Heart left ventricle (tissue), 16 donors: ENCODE measurements at regions of chr15 and their contacts with region 1.

Region 1: GRCh38 chr15:67101911-67102598 is 36.7 kb downstream of the SMAD3 start:
- DNase-seq: no peak
- ATAC-seq: no peak
- H3K4me3 ChIP-seq: no peak overlapping the region
- H3K27ac ChIP-seq: peak overlapping the region in 1 of 12 donors; percentile 73
- H3K4me1 ChIP-seq: peaks cover 12 to 98% (median 73%) of the 10 kb centered on the region in 12 donors
- H3K27me3 ChIP-seq: no peaks in the 10 kb centered on the region
- CTCF ChIP-seq: no peak
- POLR2A ChIP-seq: no peak

Region 2: GRCh38 chr15:67033571-67034044 is 68.4 kb before region 1 on chr15:
- intact Hi-C with region 1: no loop called
- DNase-seq: peak; percentile 34 to 76 (median 44)
- ATAC-seq: peak in 3 of 4 donors; percentile 59 to 68 (median 67)
- H3K4me3 ChIP-seq: peak overlapping the region in 11 of 12 donors; percentile 5 to 48 (median 44)
- H3K27ac ChIP-seq: peak overlapping the region in 1 of 12 donors; percentile 19
- H3K4me1 ChIP-seq: peaks cover 0 to 51% (median 22%) of the 10 kb centered on the region in 12 donors
- H3K27me3 ChIP-seq: no peaks in the 10 kb centered on the region
- CTCF ChIP-seq: peak in 3 of 12 donors; percentile 24 to 41 (median 27)
- POLR2A ChIP-seq: no peak

Region 3: DNA sequence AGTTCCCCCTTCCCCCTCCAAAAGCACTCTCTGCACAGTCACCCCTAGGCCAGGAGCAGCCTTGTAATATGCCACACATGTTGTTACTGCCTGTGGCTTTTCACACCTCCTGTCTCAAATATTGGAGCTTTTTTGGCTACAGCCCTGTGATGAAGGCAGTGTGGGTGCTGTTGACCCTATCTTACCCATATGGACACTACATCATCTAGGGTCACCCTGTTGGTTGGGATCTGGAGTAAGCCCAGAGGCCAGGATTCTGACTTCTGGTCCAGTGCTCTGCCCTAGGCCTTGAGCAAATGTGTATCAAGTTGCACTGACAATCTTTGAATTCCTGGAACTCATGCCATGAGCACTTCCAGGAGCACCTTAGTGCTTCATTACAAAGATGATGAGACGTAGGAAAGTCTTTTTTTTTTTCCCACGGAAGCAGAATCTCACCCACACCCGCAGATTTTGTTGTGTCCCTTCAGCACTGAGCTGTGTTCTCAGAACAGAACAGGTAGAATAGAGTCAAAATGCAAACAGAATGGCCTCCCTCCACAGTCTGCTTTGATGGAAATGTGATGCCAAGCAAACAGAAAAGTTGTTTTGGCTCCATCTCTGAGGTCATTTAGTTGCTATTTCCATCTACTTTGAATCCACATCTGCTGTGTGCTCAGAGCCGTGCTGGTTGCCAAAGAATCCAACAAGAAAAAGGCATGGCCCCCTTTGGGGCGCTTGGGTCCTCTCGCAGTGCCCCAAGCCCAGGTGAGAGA is 13.0 kb after region 1 on chr15:
- intact Hi-C with region 1: loop called in 1 of 10 experiments (anchors 2 kb)
- DNase-seq: peak in 1 of 5 donors; percentile 21
- ATAC-seq: no peak
- H3K4me3 ChIP-seq: no peak overlapping the region
- H3K27ac ChIP-seq: peak overlapping the region in 5 of 12 donors; percentile 0 to 93 (median 39)
- H3K4me1 ChIP-seq: peaks cover 12 to 82% (median 53%) of the 10 kb centered on the region in 12 donors
- H3K27me3 ChIP-seq: no peaks in the 10 kb centered on the region
- CTCF ChIP-seq: no peak
- POLR2A ChIP-seq: no peak

Region 4: DNA sequence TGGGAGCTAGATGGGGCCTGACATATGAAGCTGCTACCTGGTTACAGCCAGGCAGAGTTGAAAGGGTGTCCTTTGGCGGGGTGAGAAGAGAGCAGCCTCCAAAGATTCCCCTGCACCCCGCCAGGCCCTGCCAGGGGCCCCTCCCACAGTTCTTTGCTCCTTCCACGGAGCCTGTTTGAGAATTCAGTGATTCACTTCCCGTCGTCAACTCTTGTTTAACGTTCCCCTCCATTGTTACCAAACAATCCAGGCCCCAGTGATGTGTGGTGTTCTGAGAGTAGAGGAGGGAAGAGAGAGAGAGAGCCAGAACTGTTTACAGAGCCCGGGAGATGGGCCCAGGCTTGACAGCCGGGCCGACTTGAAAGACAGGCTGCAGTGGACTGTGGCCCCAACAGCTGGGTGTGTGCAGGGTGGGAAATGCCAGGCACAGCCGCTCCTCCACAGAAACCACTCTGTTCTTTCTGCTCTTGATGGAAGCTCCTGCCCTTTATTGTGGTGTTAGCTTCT is 44.9 kb after region 1 on chr15:
- intact Hi-C with region 1: loop called in 1 of 10 experiments (anchors 5 kb)
- DNase-seq: peak in 3 of 5 donors; percentile 49 to 59 (median 50)
- ATAC-seq: peak; percentile 22 to 73 (median 56)
- H3K4me3 ChIP-seq: no peak overlapping the region
- H3K27ac ChIP-seq: peak overlapping the region; percentile 14 to 87 (median 74)
- H3K4me1 ChIP-seq: peaks cover 18 to 95% (median 80%) of the 10 kb centered on the region in 12 donors
- H3K27me3 ChIP-seq: no peaks in the 10 kb centered on the region
- CTCF ChIP-seq: no peak
- POLR2A ChIP-seq: no peak